Dorsolateral prefrontal cortex (tissue), 120 donors: ENCODE measurements at regions of chr6 and their contacts with region 1.

Region 1: DNA sequence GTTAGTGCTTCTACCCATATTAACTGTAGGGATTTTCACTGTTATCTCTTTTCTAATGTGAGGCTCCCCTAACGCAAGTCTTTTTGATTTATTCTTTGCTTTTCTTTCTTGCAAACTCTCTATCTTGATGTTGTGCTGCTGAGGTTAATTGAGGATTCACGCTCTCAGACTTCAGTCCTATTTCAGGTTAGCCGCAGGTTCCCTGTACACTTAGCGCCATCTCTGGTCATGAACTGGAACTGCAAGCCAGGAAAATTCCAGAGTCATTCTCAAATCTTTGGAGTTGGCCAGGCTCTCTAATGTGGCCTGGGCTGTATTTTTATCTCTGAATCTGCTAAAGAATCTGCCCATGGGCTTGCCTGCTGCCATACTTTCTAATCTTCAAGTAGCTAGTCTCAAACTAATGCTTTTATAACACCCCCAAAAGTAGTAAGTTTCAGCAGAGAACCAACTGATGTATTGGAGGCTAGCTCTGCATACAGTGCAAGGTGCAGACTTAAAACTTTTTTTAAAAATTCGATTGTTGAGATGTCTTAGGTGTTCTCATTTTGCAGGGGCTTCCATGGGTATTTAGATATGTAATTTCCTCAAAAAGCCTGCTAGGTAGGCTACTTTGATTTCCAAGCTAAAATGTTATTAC is 91.1 kb upstream of the OPRM1 start:
- DNase-seq: peak in 3 of 10 donors; percentile 5 to 43 (median 19)
- H3K4me3 ChIP-seq: no peak overlapping the region
- H3K27ac ChIP-seq: no peak overlapping the region
- H3K27me3 ChIP-seq: peaks cover 0 to 12% (median 0%) of the 10 kb centered on the region in 45 donors
- CTCF ChIP-seq: peak; percentile 60 to 90 (median 78)

Region 2: GRCh38 chr6:153231048-153231646 is 716.8 kb before region 1 on chr6:
- intact Hi-C with region 1: loop called in 1 of 2 experiments (anchors 10 kb)
- DNase-seq: peak; percentile 30 to 82 (median 64)
- H3K4me3 ChIP-seq: no peak overlapping the region
- H3K27ac ChIP-seq: no peak overlapping the region
- H3K27me3 ChIP-seq: no peaks in the 10 kb centered on the region
- CTCF ChIP-seq: peak; percentile 59 to 89 (median 79)

Region 3: GRCh38 chr6:153767127-153767526 is 180.8 kb before region 1 on chr6:
- intact Hi-C with region 1: no loop called
- DNase-seq: no peak
- H3K4me3 ChIP-seq: no peak overlapping the region
- H3K27ac ChIP-seq: no peak overlapping the region
- H3K27me3 ChIP-seq: no peaks in the 10 kb centered on the region
- CTCF ChIP-seq: no peak